Activated T-helper 2 cell treated with anti-CD3 and anti-CD28 coated beads, Interferon-gamma antibody, Interleukin-2, Interleukin-4, amounts not matched to agents 10 μg/mL and 5 μg/mL and 100 μg/mL, durations not matched to agents 14 hours and 24 hours and 36 hours (primary cell): ENCODE measurements at regions of chr13 and their contacts with region 1.

Region 1: GRCh38 chr13:30465585-30466357 is at the start of gene HMGB1:
- DNase-seq: peak; percentile 98
- H3K4me3 Mint-ChIP-seq: peak within 1 kb of the TSS; percentile 94
- H3K27ac Mint-ChIP-seq: peak within 1 kb of the TSS; percentile 100
- H3K4me1 Mint-ChIP-seq: peaks cover 26% of the 10 kb centered on the region
- H3K27me3 Mint-ChIP-seq: no peaks in the 10 kb centered on the region
- total RNA-seq, gene HMGB1: 594 and 603 TPM in 2 replicates

Region 2: DNA sequence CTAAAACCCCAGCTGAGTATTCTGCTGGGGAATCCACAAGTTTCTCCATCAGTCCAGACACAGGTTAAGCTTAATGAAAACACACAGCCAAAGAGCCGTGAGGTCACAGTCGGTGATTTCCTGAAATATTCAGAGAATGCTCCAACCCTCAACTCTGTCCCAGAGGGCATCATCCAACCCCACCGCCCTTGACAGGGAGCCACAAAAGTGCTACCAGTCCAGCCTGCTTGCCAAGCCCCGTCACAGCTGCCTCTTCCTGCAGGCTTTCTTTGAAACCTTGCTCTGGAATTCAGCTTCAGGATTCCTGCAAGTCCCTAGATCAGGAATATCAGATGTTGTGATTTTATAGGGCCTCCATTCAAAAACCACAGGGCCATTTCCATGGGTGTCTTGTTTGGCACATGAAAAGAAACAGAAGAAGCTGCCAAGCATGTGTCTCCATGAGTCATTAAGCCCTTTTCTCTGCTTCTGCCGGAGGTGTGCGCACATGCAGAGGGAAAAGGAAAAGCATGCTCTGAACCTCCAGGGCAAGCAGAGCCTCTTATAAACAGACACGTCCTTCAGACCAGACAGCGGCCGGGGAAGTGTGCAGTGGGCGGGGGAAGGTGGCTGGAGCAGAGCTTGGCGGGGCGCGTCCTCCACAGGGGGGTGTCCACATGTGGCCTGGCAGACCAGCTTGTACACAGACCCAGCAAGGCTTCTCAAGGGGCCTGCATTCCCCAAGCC is 323.1 kb before region 1 on chr13:
- intact Hi-C with region 1: loop called (anchors 5 kb)
- DNase-seq: no peak
- H3K4me3 Mint-ChIP-seq: no peak overlapping the region
- H3K27ac Mint-ChIP-seq: peak overlapping the region; percentile 79
- H3K4me1 Mint-ChIP-seq: peaks cover 49% of the 10 kb centered on the region
- H3K27me3 Mint-ChIP-seq: peaks cover 3% of the 10 kb centered on the region

Region 3: DNA sequence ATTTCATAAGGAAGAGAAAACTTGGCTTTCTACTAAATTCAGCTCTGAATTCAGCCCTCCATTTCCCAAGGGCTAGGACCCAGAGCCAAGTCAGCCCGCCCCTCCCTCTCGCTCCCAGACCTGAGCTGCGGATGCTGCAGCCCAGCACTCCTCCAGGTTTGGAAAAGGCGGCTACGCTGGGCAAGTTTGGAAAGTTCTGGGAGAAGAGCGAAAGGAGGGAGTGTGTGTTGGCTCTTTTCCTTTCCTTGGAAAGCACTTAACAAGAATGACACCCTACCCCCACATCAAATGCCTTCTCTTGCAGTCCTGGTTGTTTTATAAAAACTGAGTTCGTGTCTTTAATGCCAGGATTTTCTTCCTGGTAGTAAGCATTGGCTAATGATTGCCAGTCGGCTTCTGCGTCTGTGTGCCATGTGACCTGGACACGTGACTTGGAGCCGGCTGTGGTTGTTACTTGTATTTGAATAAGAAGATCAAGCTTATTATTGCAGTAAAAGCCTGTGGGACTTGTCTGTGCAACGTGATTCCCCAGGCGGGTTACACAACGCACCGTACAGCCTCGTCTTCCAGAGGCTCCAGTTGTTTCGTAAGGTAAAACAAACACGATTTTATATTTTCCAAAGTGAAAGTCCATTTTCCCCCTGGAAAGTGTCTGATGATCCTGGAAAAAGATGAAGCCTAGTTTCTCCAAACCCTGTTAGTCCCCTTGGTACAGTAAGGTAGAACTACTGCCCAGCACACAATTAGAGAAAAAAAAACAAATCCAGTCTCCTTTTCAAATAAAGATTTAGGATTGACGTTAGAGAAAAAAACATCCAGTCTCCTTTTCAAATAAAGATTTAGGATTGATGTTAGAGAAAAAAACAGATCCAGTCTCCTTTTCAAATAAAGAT is 70.3 kb before region 1 on chr13:
- intact Hi-C with region 1: loop called (anchors 1 kb)
- DNase-seq: peak; percentile 67
- H3K4me3 Mint-ChIP-seq: peak overlapping the region; percentile 82
- H3K27ac Mint-ChIP-seq: peak overlapping the region; percentile 93
- H3K4me1 Mint-ChIP-seq: peaks cover 35% of the 10 kb centered on the region
- H3K27me3 Mint-ChIP-seq: no peaks in the 10 kb centered on the region

Region 4: GRCh38 chr13:30429721-30430694 is 35.8 kb before region 1 on chr13:
- intact Hi-C with region 1: loop called (anchors 2 kb)
- DNase-seq: no peak
- H3K4me3 Mint-ChIP-seq: peak overlapping the region; percentile 59
- H3K27ac Mint-ChIP-seq: peak overlapping the region; percentile 89
- H3K4me1 Mint-ChIP-seq: peaks cover 28% of the 10 kb centered on the region
- H3K27me3 Mint-ChIP-seq: no peaks in the 10 kb centered on the region

Region 5: DNA sequence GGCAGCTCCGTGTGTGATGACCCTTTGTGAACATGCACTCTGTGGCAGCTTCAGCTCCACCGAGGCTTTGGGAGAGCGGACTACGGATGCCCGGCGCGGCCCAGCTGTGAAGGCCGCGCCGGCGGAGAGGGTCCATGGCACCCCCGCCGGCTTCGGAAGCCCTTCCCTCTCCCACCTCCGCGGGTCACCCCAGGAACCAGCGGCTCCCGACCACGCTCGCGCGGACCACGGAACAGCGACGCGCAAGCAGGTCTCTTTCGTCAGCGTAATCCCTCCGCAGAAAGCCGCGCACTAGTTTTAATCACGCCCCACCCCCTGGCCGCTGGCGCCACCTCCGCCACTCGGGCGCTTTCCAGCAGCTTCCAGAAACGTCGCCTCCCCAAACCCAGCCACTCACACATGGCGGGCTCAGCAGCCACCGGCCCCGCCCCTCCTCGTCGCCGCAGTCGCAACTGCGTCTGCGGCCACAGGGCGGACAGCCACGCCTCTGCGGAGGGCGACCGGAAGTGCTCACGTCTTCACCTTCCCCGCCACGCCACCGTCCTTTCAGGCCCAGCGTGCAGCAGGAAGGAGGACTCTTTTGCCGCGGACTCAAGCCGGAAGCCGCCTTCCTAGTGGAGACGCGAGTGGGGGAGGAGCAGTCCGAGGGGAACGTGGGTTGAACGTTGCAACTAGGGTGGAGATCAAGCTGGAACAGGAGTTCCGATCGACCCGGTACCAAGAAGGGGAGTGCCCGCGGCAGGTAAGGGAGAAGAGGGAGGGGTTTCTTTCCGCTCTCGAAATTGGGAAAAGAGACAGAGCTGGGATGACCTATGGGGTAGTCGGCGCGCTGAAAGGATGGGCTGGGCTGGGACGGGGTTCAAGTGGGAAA is 151.8 kb after region 1 on chr13 and contains the start of gene USPL1:
- intact Hi-C with region 1: loop called (anchors 1 kb)
- DNase-seq: peak; percentile 99
- H3K4me3 Mint-ChIP-seq: no peak within 1 kb of the TSS
- H3K27ac Mint-ChIP-seq: no peak within 1 kb of the TSS
- H3K4me1 Mint-ChIP-seq: peaks cover 26% of the 10 kb centered on the region
- H3K27me3 Mint-ChIP-seq: no peaks in the 10 kb centered on the region
- total RNA-seq, gene USPL1: 14.0 and 14.3 TPM in 2 replicates

Region 6: GRCh38 chr13:31161828-31162590 is 696.2 kb after region 1 on chr13 and contains the start of gene HSPH1:
- intact Hi-C with region 1: loop called (anchors 10 kb)
- DNase-seq: peak; percentile 98
- H3K4me3 Mint-ChIP-seq: peak within 1 kb of the TSS; percentile 95
- H3K27ac Mint-ChIP-seq: peak within 1 kb of the TSS; percentile 97
- H3K4me1 Mint-ChIP-seq: peaks cover 41% of the 10 kb centered on the region
- H3K27me3 Mint-ChIP-seq: no peaks in the 10 kb centered on the region
- total RNA-seq, gene HSPH1: 269 and 274 TPM in 2 replicates